ENCODE measurements at regions of chr16 and their contacts with region 1.

Region 1: DNA sequence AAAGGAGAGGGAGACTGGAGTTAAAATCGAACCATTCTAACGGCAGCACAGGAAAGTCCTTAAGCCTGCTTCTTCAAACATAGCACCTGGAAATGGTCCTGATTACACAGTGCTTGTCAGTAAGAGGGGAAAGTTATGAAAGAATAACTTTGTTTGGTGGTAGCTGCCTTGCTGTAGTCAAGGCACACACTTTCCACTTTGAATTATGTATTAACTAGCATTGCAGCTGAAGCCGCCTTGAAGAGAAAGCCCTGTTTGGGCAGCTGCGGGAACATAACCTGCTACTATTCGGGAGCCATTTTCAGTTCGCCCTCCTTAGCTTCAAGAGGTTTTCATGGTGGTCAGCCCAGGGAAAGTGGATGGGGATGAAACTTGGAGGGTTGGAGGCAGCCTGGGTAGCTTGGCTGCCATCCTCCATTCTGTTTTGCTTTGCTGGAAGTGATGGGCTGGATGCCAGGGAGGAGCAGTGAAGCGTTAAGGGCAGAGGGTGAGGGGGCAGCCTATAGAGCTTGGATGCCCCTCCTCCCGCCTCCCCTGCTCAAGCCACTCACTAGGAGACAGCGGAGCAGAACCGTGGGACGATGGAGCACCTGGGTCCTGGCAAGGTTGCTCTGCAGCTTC is 5.3 kb upstream of the HAS3 start:
- DNase-seq: no peak
- ATAC-seq: no peak
- H3K4me3 ChIP-seq: no peak overlapping the region
- H3K27ac ChIP-seq: no peak overlapping the region
- H3K4me1 ChIP-seq: peaks cover 4% of the 10 kb centered on the region; the same call in 1 of the 2 replicates
- H3K27me3 ChIP-seq: no peaks in the 10 kb centered on the region
- CTCF ChIP-seq: no peak

Region 2: DNA sequence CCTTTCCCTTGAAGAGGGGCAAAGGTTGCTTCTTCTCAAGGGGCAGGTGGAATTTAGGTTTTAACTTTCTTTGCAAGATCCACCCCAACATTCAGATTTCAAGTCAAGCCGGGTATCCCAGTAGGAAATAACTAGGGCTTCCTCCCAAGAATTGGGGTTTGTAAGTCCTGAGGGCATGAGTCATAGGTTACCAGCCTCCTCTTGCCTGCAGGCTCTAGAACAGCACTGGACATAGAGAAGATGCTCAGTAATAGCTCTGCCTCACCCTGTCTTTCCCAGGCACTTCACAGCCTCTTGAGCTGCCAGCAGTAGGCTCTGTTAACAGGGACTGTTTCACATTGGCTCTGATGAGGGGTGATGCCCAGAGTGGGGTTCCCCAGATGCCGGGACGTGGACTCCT is 596.8 kb before region 1 on chr16:
- CTCF ChIA-PET with region 1: no interaction called
- POLR2A ChIA-PET with region 1: interaction called, 11 read pairs
- intact Hi-C with region 1: no loop called
- DNase-seq: peak; percentile 28
- ATAC-seq: no peak
- H3K4me3 ChIP-seq: no peak overlapping the region
- H3K27ac ChIP-seq: no peak overlapping the region
- H3K4me1 ChIP-seq: no peaks in the 10 kb centered on the region; the same call in 1 of the 2 replicates
- H3K27me3 ChIP-seq: no peaks in the 10 kb centered on the region
- CTCF ChIP-seq: no peak

Region 3: GRCh38 chr16:69039333-69039941 is 60.7 kb before region 1 on chr16:
- CTCF ChIA-PET with region 1: no interaction called
- POLR2A ChIA-PET with region 1: no interaction called
- intact Hi-C with region 1: no loop called
- DNase-seq: peak; percentile 44
- ATAC-seq: no peak
- H3K4me3 ChIP-seq: no peak overlapping the region
- H3K27ac ChIP-seq: peak overlapping the region; percentile 72
- H3K4me1 ChIP-seq: peaks cover 18% of the 10 kb centered on the region
- H3K27me3 ChIP-seq: no peaks in the 10 kb centered on the region
- CTCF ChIP-seq: no peak

Region 4: DNA sequence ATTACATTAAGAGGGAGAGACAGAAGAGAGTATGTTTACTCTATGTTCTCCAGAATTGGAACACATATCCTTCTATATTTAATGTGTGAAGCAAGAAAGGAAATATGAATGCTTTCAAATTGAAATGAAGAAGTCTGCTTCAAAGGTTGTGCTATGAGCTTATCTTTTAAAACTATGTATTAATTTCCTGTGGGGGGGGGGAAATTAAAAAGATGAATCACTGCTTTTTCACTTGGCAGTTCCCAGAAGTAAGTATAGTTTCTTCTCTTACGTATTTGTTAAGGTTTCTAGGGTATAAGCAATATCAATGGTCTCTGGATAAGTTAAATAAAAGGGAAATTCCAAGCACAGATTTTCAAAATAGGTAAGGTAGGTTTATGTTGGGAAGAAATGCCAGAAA is 278.6 kb after region 1 on chr16:
- CTCF ChIA-PET with region 1: no interaction called
- POLR2A ChIA-PET with region 1: interaction called, 13 read pairs
- intact Hi-C with region 1: no loop called
- DNase-seq: no peak
- ATAC-seq: no peak
- H3K4me3 ChIP-seq: no peak overlapping the region
- H3K27ac ChIP-seq: no peak overlapping the region
- H3K4me1 ChIP-seq: no peaks in the 10 kb centered on the region
- H3K27me3 ChIP-seq: no peaks in the 10 kb centered on the region
- CTCF ChIP-seq: no peak

Measured in PC-3 (cell line).